ENCODE measurements at regions of chr14 and their contacts with region 1.

Region 1: GRCh38 chr14:24135834-24136542 is at the start of gene PSME1:
- DNase-seq: peak; percentile 93
- H3K4me3 Mint-ChIP-seq: peak within 1 kb of the TSS; percentile 94
- H3K27ac Mint-ChIP-seq: peak within 1 kb of the TSS; percentile 93
- H3K4me1 Mint-ChIP-seq: peaks cover 57% of the 10 kb centered on the region
- H3K27me3 Mint-ChIP-seq: no peaks in the 10 kb centered on the region
- total RNA-seq, gene PSME1: 498 to 547 TPM

Region 2: GRCh38 chr14:23953464-23954278 is 182.3 kb before region 1 on chr14 and contains the start of gene DHRS4:
- CTCF ChIA-PET with region 1: no interaction called
- POLR2A ChIA-PET with region 1: no interaction called
- DNase-seq: peak; percentile 86
- H3K4me3 Mint-ChIP-seq: peak within 1 kb of the TSS; percentile 83
- H3K27ac Mint-ChIP-seq: peak within 1 kb of the TSS; percentile 93
- H3K4me1 Mint-ChIP-seq: peaks cover 27% of the 10 kb centered on the region
- H3K27me3 Mint-ChIP-seq: no peaks in the 10 kb centered on the region
- total RNA-seq, gene DHRS4: 28.8 to 31.3 TPM

Region 3: DNA sequence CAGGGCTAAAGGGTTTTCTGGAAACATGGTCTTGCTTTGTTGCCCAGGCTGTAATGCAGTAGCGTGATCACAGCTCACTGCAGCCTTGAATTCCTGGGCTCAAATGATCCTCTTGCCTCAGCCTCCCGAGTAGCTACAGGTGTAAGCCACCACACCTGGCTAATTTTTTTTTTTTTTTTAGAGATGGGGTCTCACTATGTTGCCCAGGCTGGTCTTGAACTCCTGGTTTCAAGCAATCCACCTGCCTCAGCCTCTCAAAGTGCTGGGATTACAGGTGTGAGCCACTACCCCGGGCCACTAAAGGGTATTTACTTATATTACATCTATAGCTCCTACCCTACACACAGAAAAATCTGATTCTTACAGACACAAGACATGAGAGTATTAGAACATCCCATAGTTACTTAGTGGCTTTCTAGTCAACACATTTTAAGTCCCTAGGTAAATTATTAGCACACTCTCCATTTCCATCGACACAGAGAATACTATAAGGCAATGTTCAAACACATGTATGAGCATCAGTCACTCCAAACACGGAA is 27.6 kb before region 1 on chr14:
- CTCF ChIA-PET with region 1: interaction called, 11 read pairs
- POLR2A ChIA-PET with region 1: interaction called, 3 read pairs
- DNase-seq: no peak
- H3K4me3 Mint-ChIP-seq: no peak overlapping the region
- H3K27ac Mint-ChIP-seq: peak overlapping the region; percentile 96
- H3K4me1 Mint-ChIP-seq: peaks cover 44% of the 10 kb centered on the region
- H3K27me3 Mint-ChIP-seq: no peaks in the 10 kb centered on the region

Region 4: DNA sequence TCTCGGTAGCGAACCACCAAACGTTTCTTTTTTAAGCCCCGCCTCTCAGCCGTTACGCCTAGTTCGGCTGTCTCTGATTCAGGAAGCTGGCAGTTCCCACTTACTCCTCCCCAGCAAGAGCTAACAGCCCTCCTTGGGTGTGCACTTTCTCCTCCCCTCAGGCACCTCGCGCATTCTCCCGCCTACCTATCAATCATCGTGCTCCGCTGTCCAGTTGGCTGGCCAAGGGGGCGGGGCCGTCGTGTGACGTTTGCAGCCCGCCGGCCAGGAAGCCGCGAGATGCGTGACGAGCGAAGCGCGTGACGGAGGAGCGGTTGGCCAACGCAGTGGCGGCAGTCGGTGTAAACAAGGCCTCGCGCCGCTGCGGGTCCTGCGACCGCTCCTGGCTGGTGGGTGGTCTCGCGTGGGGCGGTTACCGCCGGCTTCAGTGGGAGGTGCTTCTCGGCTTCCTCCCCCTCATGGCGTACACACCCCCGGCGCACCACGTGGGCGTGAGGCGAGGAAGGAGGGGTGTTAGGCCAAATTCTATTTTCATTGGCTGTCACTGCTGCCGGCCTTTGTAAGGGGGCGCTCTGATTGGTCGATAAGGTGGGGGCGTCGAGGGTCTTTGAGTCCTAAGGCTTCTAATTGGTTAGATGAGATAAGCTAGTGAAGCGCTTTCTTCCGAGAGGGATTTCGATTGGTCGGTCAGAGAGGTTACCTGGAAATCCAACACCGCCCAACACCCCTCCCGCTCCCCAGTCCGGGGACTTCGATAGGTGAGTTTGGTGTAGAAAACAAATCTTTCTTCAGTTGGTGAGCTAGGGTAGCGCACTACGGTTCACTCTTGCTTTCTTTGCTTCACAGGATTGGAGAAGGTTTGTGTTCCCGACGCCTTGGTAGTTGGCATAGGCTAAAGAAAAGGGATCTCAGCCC is 21.2 kb before region 1 on chr14 and contains the starts of genes DCAF11 and NRL:
- CTCF ChIA-PET with region 1: interaction called, 16 read pairs
- POLR2A ChIA-PET with region 1: interaction called, 7 read pairs
- DNase-seq: peak; percentile 99
- H3K4me3 Mint-ChIP-seq: peak within 1 kb of the TSS; percentile 100
- H3K27ac Mint-ChIP-seq: peak within 1 kb of the TSS; percentile 99
- H3K4me1 Mint-ChIP-seq: peaks cover 51% of the 10 kb centered on the region
- H3K27me3 Mint-ChIP-seq: no peaks in the 10 kb centered on the region
- total RNA-seq, gene DCAF11: 106 to 116 TPM
- total RNA-seq, gene NRL: 3.1 to 3.3 TPM

Region 5: DNA sequence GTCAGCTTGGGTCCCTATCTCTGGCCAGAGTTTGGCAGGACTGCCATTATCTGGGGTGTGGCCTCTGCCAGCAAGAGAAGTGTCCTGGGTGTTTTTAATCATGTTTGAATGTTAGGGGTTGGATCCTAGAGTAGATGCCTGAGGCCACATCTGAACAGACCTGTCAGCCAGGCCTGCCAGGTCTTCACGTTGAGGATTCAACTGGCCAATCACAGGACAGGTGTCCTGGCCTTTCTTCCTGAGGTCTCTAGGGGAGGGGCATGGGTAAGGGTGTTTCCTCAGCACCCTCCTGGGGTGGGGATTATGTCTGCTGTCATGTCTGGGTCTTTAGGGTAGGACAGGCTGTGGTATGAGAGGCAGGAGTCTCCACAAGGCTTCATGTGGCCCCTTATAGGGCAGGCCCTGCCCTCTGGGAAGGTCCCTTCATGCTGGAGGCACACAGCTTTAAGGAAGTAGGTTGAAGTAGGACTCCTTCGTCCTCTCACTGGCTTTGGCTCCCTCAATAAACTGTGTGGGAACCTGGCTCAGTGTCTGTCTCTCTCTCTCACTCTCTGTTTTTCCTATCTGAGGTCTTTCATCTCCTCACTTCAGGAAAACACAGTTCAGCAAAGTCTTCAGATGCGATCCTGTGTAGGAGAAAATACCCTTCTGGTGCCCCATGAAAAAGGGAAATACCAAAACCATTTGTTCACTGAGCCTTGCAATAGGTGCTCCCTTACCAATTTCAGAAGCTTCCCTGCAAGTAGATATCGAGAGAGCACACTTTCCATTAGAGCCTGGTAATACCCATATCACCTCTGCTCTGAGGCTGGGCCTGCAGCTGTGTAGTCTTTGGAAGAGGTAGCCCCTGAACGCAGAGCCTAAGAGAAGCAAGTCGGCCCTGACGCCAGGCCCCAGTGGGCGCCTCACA is 12.2 kb before region 1 on chr14:
- CTCF ChIA-PET with region 1: interaction called, 12 read pairs
- POLR2A ChIA-PET with region 1: no interaction called
- DNase-seq: no peak
- H3K4me3 Mint-ChIP-seq: no peak overlapping the region
- H3K27ac Mint-ChIP-seq: no peak overlapping the region
- H3K4me1 Mint-ChIP-seq: peaks cover 9% of the 10 kb centered on the region
- H3K27me3 Mint-ChIP-seq: no peaks in the 10 kb centered on the region

Region 6: DNA sequence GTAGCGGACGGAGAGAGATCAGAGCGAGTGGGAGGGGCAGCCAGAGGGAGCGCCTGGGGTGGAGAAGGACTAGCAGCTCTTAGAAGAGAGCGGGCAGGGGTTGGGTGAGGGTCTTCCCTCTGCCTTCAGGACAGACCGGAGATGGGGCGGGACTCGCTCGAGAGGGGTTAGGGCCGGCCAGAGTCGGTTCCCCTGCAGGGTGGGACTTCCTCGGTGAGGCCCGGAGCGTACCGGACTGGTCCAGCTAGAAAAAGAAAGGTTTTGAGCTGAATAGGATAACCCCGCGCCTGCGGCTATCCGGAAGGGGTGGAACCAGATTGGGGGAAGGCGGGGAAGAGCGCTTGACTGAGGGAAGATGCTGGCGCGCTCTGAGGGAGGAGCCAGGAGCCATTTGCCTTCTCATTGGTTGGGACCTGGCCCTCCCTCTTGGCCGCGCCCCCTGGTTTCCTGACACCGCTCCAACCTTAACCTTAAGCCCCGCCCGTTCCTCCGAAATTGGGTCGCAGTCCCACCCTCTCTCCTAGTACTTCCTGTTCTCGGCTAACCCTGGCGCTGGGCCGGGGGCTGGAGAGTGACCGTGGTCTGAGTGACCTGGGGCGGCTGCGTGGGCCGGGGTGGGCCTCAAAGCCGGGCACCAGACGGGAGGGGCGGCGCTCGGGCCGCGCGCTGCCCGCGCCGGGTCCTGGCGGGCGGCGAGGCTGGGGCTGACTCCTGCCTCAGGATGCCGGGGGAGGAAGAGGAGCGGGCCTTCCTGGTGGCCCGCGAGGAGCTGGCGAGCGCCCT is 11.2 kb after region 1 on chr14 and contains the start of gene RNF31:
- CTCF ChIA-PET with region 1: interaction called, 18 read pairs
- POLR2A ChIA-PET with region 1: interaction called, 8 read pairs
- DNase-seq: peak; percentile 100
- H3K4me3 Mint-ChIP-seq: peak within 1 kb of the TSS; percentile 100
- H3K27ac Mint-ChIP-seq: peak within 1 kb of the TSS; percentile 99
- H3K4me1 Mint-ChIP-seq: peaks cover 68% of the 10 kb centered on the region
- H3K27me3 Mint-ChIP-seq: no peaks in the 10 kb centered on the region
- total RNA-seq, gene RNF31: 147 to 160 TPM